ENCODE measurements at regions of chr2 and their contacts with region 1.

Region 1: DNA sequence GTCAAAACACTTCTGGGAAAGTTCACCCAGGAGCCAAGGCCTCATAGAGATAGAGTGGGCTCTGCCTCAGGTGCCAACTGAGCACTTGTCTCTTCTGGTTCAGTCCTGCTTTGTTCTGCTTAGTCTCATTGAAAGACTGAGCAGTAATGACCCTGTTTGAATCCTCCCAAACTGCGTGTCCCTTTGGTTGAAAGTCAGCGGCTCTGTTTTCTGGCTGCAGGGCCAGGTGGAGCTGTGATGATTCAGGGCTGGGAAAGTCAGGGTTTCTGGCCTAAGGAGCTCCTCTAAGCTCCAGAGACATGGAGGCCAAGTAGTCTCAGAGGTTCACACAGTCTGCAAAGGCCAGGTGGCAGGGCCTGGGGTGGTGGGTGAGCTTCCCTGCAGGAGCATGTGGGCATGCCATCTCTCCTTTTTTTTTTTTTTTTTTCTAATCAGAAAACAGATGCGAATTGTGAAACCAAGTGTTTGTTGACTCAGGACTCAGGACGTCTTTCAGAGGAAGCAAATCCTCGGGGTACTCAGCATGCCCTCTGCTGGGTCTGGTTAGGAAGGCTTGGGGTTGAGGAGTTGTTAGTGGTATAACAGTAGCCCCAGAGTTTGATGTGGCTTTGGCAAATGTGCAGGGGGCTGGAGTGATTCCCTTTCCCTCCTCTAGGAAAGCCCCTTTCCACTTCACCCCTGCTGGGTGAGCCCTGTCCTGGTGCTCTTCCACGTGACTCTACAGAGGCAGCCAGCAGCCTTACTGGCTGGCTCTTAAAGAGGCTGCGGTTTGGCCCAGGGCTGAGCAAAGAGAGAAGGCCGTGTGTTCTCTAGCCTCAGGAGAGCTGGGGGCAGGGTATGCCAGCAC is 38.3 kb downstream of the TMEM17 start:
- DNase-seq: no peak

Region 2: DNA sequence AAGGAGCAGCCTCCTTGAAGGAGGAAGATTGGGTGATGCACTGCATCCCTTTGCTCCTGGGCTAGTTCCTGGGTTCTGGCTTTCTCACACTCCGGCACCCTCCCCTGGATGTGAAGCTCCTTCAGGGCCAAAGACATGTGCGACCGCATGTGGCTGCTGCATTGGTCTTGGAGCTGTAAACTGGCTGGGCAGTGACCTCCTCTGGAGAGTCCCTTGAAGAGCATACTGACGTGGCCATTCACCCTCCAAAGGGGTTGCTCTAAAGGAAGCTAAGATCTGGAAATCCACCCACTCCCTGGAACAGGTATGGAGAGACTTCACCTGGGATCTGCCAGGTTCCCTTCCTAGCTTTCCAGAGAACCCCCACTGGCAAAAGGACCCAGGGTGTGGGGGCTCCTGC is 23.8 kb before region 1 on chr2:
- intact Hi-C with region 1: no loop called
- DNase-seq: no peak

Region 3: DNA sequence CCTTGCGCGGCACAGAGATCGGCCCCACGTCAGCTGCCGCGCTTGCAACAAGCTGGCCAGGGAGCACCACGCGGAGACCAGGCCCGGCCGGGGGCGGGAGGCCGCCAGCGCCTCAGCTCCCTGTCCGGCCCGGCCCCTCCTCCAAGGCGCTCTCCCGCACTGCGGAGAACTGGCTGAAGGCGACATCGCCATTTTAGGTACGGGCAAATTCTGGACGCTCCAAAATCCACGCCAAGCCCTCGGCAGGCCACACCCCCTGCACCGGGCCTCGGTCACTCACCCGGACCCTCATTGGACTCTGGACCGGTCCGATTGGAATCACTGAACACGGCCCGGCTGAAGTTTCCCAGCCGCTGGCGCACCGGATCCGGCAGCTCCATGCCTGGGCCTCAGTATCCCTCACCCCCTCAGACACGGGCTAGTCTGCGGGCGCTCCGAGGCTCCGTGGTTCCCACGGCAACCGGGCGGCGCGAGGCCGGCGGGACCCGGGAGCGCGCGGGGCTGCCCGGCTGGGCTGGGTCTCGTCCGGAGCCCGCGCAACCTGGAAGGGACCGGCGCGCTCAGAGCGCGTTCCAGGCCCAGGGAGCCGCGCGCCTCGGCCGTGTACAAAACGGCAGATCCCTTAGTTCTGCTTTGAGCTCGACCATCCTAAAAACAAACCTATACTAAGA is 38.2 kb after region 1 on chr2 and contains the start of gene TMEM17:
- intact Hi-C with region 1: loop called (anchors 5 kb)
- DNase-seq: peak; percentile 94
- total RNA-seq, gene TMEM17: 1.4 TPM

Region 4: DNA sequence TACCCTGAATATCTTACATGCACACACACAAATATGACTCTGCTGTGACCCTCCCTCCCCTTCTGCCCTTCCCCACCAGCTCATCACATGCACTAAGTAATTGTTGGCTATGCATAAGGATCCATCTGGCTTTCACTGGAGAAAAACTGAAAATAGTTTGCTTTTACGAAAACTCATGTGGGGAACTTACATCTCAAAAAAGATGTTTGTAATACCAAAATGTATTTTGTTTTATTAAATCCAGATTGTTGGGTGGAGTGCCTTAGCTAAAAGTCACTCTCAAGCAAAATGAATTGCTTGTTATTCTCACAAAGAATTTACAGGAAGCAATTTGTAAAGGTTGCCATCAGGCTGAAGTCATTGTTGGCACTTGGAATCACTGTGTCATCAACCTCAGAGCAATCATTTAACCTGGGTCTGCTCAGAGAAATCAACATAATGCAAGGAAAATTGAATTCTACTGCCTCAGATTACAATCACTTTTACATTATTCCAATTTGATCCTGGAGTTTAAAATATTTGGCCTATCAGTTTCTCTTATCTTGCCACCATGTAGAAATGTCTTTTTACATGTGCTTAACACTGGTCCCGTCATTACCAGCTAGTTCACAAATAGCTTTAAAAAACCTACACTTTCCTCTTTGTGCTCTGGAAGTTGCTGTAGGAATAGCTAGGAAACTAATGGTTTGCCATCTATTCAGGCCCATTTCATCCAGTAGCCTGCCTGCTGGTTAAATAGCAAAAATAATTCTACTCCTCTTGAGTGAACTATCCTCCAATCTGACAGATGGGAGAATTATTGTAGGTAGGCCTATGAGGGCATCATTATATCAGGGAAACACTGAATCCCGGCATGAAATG is 128.6 kb after region 1 on chr2:
- intact Hi-C with region 1: loop called (anchors 5 kb)
- DNase-seq: no peak

Region 5: GRCh38 chr2:62724886-62725711 is 257.4 kb after region 1 on chr2:
- intact Hi-C with region 1: no loop called
- DNase-seq: no peak

Measured in cardiac septum (tissue), 1 donor.